ENCODE measurements at regions of chr10 and their contacts with region 1.

Region 1: DNA sequence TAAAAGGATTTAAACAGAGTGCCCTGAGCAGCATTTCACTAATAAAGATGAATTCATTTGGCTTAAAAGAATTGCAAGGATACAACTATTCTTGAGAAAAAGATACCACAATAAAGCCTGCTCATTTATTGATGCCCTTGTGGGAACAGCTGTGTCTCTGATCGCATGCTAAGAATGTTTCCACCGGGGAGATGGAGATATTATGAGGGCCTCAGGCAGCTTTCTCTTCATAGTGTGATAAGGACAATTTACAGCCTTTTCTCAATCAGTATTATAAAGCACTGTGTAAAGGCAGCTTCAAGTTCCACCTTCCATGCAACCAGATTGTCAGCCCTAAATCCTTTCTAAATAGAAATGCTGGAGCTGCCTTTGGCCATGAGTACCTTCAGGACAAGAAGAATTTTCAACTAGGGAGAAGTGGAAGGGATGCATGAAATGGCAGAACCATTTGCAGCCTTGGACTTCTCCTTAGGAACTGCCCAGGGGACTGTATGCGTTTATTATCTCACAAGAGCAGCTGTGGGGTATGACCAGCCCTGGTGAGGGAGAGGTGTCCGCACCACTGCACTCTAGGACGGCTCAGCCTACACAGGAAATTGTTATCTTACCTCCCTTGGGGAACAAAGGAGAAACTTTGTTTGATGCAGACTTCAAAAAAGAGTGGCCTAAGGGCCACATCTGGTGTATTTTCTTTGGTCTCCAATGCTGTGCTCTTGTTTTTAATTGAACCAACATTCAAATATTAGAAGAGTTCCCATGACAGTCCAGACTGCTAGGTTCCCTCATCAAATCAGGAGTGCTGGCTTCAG is 116.9 kb upstream of the PCGF5 start:
- DNase-seq: no peak
- H3K4me3 ChIP-seq: no peak overlapping the region
- H3K27ac ChIP-seq: no peak overlapping the region
- H3K4me1 ChIP-seq: peaks cover 14% of the 10 kb centered on the region
- H3K27me3 ChIP-seq: no peaks in the 10 kb centered on the region
- CTCF ChIP-seq: no peak

Region 2: GRCh38 chr10:91061608-91062007 is 42.0 kb before region 1 on chr10:
- intact Hi-C with region 1: loop called (anchors 2 kb)
- DNase-seq: no peak
- H3K4me3 ChIP-seq: no peak overlapping the region
- H3K27ac ChIP-seq: no peak overlapping the region
- H3K4me1 ChIP-seq: peaks cover 5% of the 10 kb centered on the region
- H3K27me3 ChIP-seq: no peaks in the 10 kb centered on the region
- CTCF ChIP-seq: no peak

Measured in left ventricle myocardium inferior (tissue), 1 donor.